A673 (cell line): ENCODE measurements at regions of chr4 and their contacts with region 1.

Region 1: DNA sequence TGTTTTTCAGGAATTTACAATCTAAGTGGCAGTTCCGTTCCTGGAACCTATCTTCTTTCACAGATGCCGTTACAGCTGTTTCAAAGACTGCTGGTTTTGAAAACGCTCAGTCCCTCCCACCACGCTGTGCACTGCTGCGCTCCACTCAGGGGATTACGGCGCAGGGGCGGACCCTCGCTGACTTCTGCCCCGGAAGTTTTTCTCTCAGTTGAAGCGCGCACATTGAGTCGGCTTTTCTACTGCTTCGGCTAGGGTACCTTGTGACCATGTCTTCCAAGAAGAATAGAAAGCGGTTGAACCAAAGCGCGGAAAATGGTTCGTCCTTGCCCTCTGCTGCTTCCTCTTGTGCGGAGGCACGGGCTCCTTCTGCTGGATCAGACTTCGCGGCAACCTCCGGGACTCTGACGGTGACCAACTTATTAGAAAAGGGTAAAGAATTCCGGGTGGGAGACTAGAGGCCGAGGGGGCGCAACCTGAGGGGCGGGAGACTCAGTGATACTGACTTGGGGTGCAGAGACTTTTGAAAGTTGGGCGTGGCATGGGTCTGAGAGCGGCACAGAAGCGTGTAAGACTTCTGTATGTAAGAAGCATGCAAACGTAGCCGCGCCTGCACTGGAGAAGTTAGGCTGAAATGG is 597 bp upstream of the NUDT6 start:
- DNase-seq: peak; percentile 96
- H3K4me3 ChIP-seq: peak overlapping the region; percentile 71
- H3K27ac ChIP-seq: peak overlapping the region; percentile 75
- H3K4me1 ChIP-seq: peaks cover 15% of the 10 kb centered on the region
- H3K27me3 ChIP-seq: no peaks in the 10 kb centered on the region
- CTCF ChIP-seq: no peak

Region 2: DNA sequence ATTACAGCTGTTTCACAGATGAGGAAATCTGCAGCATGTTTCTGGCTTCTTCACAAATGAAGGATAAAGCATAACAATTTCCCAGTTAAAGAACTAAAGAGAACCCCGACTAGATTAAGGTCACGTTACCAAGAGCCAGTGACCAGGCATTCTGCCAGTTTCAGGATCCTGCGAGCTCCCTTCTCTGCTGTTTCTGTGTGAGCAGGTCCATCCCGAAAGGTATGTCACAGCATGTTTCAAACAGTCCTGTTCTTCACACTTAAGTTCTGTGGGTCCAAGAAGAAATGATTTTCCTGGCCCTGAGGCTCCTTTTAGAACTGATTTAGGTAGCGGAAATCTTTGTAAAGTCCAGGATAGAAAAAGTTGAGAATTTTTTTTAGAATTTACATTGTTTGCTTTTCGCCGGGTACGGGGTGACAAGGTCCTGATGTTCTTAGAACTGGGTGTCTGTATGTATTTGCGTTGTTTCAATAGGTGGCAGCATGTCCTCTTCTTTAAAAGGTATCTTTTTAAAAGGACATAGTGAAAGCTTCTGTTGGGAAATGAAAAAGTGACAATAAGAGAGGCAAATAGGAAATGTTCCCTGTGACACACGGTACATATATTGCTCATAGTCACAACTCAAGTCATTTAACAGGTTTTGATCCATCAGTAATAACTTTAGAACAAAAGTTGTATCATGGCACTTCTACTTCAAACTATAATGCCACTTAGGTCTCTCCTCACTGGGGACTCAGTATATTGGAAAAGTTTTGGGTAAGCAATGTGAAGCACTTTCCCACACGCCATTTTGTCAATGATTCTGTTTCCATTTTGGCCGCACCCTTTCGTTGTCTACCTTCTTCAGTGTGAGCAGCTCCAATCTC is 320.5 kb before region 1 on chr4:
- CTCF ChIA-PET with region 1: no interaction called
- POLR2A ChIA-PET with region 1: no interaction called
- intact Hi-C with region 1: loop called (anchors 5 kb)
- DNase-seq: peak; percentile 64
- H3K4me3 ChIP-seq: no peak overlapping the region
- H3K27ac ChIP-seq: no peak overlapping the region
- H3K4me1 ChIP-seq: peaks cover 3% of the 10 kb centered on the region
- H3K27me3 ChIP-seq: no peaks in the 10 kb centered on the region
- CTCF ChIP-seq: peak; percentile 58

Region 3: DNA sequence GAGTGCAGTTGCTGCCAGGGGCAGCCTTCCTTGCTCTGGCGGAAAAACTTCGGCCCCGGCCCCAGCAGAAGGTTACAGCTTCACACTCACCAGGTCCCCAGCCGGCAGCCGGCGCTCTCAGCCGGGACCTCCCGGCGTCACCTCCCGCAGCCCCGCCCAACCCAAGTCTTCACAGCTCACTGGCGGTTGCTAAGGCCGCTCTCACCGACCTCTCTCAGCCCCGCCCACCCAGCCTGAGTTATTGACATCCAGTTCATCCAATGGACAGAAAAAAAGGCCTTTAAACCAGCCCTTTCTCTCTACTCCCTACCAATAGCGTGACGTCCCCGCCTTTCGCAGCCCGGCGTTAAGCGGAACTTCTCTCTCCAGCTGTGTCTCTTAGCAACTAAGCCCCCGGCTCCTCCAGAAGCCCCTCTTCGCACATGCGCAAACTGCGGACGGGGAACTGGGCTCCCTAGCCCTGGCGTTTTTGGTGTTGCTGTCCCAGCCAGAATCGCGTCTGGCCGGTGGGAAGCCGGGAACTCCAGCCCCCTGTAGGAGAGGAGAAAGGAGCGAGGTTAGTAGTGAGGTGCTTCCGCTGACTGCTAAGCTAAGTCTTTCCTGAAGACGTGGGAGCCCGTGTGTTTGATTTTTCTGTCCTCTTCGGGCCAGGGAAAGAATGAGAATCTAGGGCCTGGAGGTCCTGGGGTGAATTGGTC is 190.5 kb before region 1 on chr4 and contains the start of gene BBS12:
- CTCF ChIA-PET with region 1: no interaction called
- POLR2A ChIA-PET with region 1: no interaction called
- intact Hi-C with region 1: loop called (anchors 1 kb)
- DNase-seq: peak; percentile 100
- H3K4me3 ChIP-seq: peak within 1 kb of the TSS; percentile 68
- H3K27ac ChIP-seq: peak within 1 kb of the TSS; percentile 66
- H3K4me1 ChIP-seq: peaks cover 4% of the 10 kb centered on the region
- H3K27me3 ChIP-seq: no peaks in the 10 kb centered on the region
- CTCF ChIP-seq: peak; percentile 59
- total RNA-seq, gene BBS12: 1.9 and 2.6 TPM in 2 replicates

Region 4: DNA sequence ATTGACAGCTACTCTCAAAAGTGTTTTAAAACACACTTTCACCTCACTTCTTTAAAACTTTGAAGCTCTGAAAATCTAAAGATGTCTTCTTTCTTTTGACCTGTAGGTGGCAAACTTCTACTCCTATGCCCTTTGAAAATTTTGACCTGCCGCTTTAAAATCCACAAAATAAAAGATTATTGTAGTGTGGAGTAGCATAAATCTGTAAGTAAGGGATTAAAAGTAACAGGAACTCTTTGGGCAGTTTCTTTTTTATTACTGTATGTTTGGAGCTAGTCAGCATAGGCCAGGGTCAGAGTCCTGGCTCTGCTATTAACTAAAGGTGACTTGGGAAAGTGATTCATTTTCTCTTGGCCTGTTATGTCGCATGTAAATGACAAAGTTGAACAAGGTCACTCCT is 165.0 kb before region 1 on chr4:
- CTCF ChIA-PET with region 1: no interaction called
- POLR2A ChIA-PET with region 1: no interaction called
- intact Hi-C with region 1: loop called (anchors 1 kb)
- DNase-seq: peak; percentile 62
- H3K4me3 ChIP-seq: no peak overlapping the region
- H3K27ac ChIP-seq: no peak overlapping the region
- H3K4me1 ChIP-seq: peaks cover 5% of the 10 kb centered on the region
- H3K27me3 ChIP-seq: no peaks in the 10 kb centered on the region
- CTCF ChIP-seq: peak; percentile 81

Region 5: GRCh38 chr4:123096038-123096437 is 173.0 kb after region 1 on chr4:
- CTCF ChIA-PET with region 1: no interaction called
- POLR2A ChIA-PET with region 1: no interaction called
- intact Hi-C with region 1: loop called (anchors 10 kb)
- DNase-seq: peak; percentile 80
- H3K4me3 ChIP-seq: no peak overlapping the region
- H3K27ac ChIP-seq: no peak overlapping the region
- H3K4me1 ChIP-seq: no peaks in the 10 kb centered on the region
- H3K27me3 ChIP-seq: no peaks in the 10 kb centered on the region
- CTCF ChIP-seq: peak; percentile 76

Region 6: DNA sequence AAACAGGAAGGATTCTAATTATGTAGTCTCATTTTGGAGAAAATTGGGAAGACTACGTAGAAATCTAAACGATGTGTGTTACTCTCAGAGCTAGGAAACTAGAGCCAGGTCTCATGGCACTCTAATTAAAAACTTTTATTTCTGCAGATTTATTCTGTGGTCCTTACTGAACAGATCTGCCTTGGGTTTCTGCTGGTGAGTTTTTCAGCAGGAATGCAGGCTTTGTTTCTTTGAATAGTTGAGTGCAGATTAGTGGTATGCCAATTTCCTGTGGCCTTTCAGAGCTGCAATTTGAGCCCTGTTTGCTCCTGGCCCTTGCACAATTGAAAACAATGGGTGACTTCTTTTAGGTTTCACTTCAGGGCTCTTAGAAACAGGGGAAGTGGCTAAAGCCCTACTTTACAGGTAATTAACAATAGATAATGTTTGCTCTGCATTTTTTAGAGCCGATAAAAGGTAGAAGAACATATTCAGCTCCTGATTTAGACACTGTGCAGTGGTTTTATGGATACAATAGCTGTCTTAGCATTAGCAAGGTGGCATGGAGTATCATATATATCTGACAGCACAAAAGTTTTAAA is 495.4 kb after region 1 on chr4:
- CTCF ChIA-PET with region 1: no interaction called
- POLR2A ChIA-PET with region 1: no interaction called
- intact Hi-C with region 1: no loop called
- DNase-seq: peak; percentile 96
- H3K4me3 ChIP-seq: peak overlapping the region; percentile 22
- H3K27ac ChIP-seq: peak overlapping the region; percentile 66
- H3K4me1 ChIP-seq: peaks cover 38% of the 10 kb centered on the region
- H3K27me3 ChIP-seq: no peaks in the 10 kb centered on the region
- CTCF ChIP-seq: no peak